ENCODE measurements at regions of chr7 and their contacts with region 1.

Region 1: DNA sequence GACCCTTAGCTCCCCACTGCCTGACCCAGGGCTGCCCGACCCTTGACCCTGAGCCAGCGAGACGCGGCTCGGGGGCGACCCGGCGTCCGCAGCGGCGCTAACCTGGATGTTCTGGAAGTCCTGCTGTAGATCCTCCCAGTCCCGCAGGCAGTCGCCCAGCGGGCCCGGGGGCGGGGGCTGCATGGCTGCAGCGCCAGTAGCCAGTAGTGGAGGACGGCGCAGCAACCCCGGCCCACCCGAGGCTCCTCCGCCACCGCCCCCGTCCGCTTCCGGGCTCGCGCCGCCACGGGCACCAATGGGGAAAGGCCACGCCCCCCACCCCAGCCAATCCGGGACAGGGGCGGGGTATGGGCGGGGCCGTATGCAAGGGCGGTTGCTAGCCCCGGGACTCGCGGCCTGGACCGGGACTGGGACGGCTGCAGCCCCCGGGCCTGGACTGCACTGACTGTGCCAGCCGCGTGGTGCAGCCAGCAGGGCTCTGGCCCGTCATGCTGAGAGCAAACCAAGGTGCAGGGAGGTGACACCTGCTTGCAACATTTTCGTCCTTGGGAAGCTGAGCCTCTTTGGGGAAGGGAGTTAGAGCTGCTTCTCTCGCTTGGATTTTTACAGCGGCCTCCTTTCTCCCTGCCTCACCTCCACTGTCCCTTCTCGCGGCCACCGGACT is at the start of gene TMEM120A:
- DNase-seq: peak; percentile 97
- H3K4me3 ChIP-seq: peak within 1 kb of the TSS; percentile 79 to 100 (median 94)
- H3K27ac ChIP-seq: peak within 1 kb of the TSS; percentile 77 to 96 (median 87)
- H3K4me1 ChIP-seq: peaks cover 11 to 79% (median 28%) of the 10 kb centered on the region in 6 donors
- H3K27me3 ChIP-seq: no peaks in the 10 kb centered on the region
- CTCF ChIP-seq: peak in 10 of 11 experiments; percentile 4 to 71 (median 32)
- POLR2A ChIP-seq: peak in 2 of 3 donors; percentile 34 to 45
- total RNA-seq, gene TMEM120A: 24.9 to 57.9 (median 41.4) TPM

Region 2: DNA sequence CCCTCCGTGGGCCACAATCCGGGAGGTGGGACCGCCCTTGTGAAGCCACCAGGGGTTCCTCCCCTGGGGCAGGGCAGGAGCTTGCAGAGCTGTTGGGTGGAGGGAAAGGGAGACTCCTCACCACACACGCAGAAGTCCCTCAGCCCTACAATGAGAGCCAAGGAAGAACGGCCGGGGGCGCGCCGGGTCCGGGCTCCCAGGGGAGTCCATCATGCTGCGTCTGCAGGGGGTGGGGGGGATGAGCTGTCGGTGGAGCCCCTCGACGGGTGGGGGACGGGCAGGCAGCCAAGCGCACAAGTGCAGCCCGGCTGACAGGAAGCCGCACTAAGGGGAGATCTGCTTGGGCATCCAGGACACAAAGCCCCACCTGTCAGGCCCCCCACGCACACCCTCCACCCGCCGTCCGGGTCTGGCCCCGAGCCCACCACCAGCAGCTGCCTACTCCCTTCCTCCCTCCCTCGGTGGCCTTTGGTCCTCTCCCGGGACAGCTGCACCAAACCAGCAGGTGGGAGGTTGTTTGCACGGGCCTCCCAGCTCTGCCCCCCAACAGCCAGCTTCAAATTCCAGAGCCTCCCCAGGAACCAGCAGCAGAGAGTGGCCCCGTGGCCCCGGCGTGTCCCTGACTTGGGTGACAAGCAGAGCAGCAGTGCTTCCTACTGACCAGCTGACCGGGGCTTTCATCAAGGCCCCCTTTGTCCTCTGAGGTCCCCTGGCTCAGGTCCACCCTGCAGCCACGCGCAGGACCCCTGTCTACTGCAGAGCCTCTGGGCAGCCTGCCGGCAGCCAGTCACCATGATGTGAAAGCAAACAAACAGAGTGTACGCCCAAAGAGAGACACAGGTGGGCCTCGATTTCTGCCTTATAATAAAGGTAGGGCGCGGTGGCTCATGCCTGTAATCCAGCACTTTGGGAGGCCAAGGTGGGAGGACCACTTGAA is 306.1 kb before region 1 on chr7:
- intact Hi-C with region 1: no loop called
- DNase-seq: peak; percentile 81
- H3K4me3 ChIP-seq: peak overlapping the region in 2 of 8 donors; percentile 4 to 47
- H3K27ac ChIP-seq: peak overlapping the region in 1 of 8 donors; percentile 30
- H3K4me1 ChIP-seq: peaks cover 10 to 33% (median 20%) of the 10 kb centered on the region in 6 donors
- H3K27me3 ChIP-seq: no peaks in the 10 kb centered on the region
- CTCF ChIP-seq: no peak
- POLR2A ChIP-seq: no peak

Region 3: GRCh38 chr7:75878769-75879611 is 115.5 kb before region 1 on chr7 and contains the start of gene RHBDD2:
- intact Hi-C with region 1: loop called (anchors 10 kb)
- DNase-seq: peak; percentile 98
- H3K4me3 ChIP-seq: peak within 1 kb of the TSS; percentile 80 to 99 (median 93)
- H3K27ac ChIP-seq: peak within 1 kb of the TSS; percentile 68 to 92 (median 86)
- H3K4me1 ChIP-seq: peaks cover 6 to 78% (median 39%) of the 10 kb centered on the region in 6 donors
- H3K27me3 ChIP-seq: no peaks in the 10 kb centered on the region
- CTCF ChIP-seq: peak in 6 of 11 experiments; percentile 26 to 63 (median 48)
- POLR2A ChIP-seq: peak in 2 of 3 donors; percentile 78 to 92
- total RNA-seq, gene RHBDD2: 37.6 to 69.2 (median 54.9) TPM

Measured in spleen (tissue), 13 donors.